A549 (cell line): ENCODE measurements at regions of chr20 and their contacts with region 1.

Region 1: GRCh38 chr20:49384437-49385088 is 97.9 kb downstream of the KCNB1 start:
- DNase-seq: peak; percentile 39 to 74
- ATAC-seq: peak; percentile 73 to 87
- H3K4me3 ChIP-seq: no peak overlapping the region
- H3K27ac ChIP-seq: no peak overlapping the region; a peak in 1 of 6 replicates
- H3K4me1 ChIP-seq: peaks cover 26% of the 10 kb centered on the region
- CTCF ChIP-seq: peak; percentile 67
- EP300 ChIP-seq: no peak
- POLR2A ChIP-seq: no peak
- RAD21 ChIP-seq: peak; percentile 26 to 34; a peak in 3 of 5 replicates

Region 2: GRCh38 chr20:49267327-49267726 is 117.2 kb before region 1 on chr20:
- CTCF ChIA-PET with region 1: no interaction called
- POLR2A ChIA-PET with region 1: no interaction called
- DNase-seq: no peak
- ATAC-seq: no peak
- H3K4me3 ChIP-seq: no peak overlapping the region
- H3K27ac ChIP-seq: no peak overlapping the region
- H3K4me1 ChIP-seq: no peaks in the 10 kb centered on the region
- CTCF ChIP-seq: no peak
- EP300 ChIP-seq: no peak
- POLR2A ChIP-seq: no peak
- RAD21 ChIP-seq: no peak

Region 3: GRCh38 chr20:49323622-49324238 is 60.8 kb before region 1 on chr20:
- CTCF ChIA-PET with region 1: no interaction called
- POLR2A ChIA-PET with region 1: no interaction called
- DNase-seq: peak in 1 of 2 experiments; percentile 47
- ATAC-seq: peak; percentile 58 to 68
- H3K4me3 ChIP-seq: no peak overlapping the region
- H3K27ac ChIP-seq: no peak overlapping the region
- H3K4me1 ChIP-seq: peaks cover 4% of the 10 kb centered on the region; the same call in 1 of the 3 replicates
- CTCF ChIP-seq: no peak
- EP300 ChIP-seq: no peak
- POLR2A ChIP-seq: no peak
- RAD21 ChIP-seq: peak; percentile 33 to 44; a peak in 2 of 5 replicates

Region 4: DNA sequence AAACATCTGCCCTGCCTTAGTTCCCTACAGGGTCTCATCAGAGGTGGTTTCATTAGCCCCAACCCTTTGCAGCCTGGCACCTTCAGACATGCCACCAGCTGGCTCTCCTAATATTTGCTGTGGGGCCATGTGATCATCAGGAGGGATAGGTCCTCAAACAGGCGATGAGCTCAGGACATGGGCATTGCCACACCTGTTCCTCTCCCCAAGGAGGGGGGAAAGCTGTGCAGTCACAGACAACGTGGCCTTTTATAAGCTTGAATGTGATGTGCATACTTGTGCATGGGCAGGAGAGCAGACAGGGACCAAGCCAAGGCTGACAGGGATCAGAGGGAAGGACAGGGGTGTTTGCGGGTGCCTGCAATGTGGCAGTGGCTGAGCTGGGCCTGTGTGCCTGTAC is 27.9 kb before region 1 on chr20:
- CTCF ChIA-PET with region 1: interaction called, 25 read pairs
- POLR2A ChIA-PET with region 1: no interaction called
- DNase-seq: no peak
- ATAC-seq: peak in 1 of 2 experiments; percentile 17; a peak in 1 of 6 replicates
- H3K4me3 ChIP-seq: no peak overlapping the region
- H3K27ac ChIP-seq: no peak overlapping the region; a peak in 1 of 6 replicates
- H3K4me1 ChIP-seq: peaks cover 21% of the 10 kb centered on the region; the same call in 2 of the 3 replicates
- CTCF ChIP-seq: no peak
- EP300 ChIP-seq: no peak
- POLR2A ChIP-seq: no peak
- RAD21 ChIP-seq: no peak

Region 5: DNA sequence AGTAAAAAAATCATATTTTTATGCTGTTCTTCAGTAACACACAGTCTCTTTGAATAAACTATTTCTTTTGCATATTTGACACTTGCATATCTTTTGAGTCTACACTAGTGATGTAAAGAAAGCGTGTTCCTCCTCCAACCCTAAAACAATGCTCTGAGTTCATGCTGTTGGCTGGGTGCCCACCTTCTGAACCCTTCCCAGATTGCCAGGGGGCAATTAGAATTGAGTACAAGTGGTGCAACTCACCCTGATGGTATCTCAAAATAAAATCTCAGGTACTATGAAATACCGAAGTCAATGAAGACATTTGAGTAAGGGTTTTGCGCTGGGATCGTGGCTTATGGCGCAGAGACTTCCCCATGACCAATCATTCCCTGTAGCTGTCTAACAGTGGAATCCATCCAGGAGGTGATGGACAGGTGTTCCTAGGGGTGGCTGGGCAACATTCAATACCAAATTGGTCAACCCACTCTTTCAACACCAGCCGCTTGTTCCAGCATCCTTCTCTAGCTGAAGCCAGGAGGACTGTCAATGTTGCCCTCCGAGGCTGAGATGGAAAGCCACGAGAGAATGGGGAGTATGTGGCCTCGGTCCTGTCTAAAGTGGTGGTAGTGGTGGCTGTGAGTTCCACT is 12.4 kb before region 1 on chr20:
- CTCF ChIA-PET with region 1: interaction called, 27 read pairs
- POLR2A ChIA-PET with region 1: no interaction called
- DNase-seq: no peak
- ATAC-seq: no peak
- H3K4me3 ChIP-seq: no peak overlapping the region
- H3K27ac ChIP-seq: no peak overlapping the region
- H3K4me1 ChIP-seq: no peaks in the 10 kb centered on the region
- CTCF ChIP-seq: no peak
- EP300 ChIP-seq: no peak
- POLR2A ChIP-seq: no peak
- RAD21 ChIP-seq: no peak

Region 6: DNA sequence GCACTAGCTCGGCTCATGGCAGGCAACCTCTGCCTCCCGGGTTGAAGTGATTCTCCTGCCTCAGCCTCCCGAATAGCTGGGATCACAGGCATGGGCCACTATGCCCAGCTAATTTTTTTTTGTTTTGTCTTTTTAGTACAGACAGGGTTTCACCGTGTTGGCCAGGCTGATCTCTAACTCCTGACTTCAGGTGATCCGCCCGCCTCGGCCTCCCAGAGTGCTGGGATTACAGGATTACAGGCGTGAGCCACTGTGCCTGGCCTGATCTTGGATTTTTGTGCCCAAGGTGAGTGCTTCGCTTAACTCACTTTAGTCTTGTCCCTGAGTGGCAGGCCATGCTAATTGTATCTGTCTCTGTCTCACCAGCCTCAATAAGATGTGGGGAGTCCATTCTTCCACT is 19.3 kb after region 1 on chr20:
- CTCF ChIA-PET with region 1: interaction called, 60 read pairs
- POLR2A ChIA-PET with region 1: no interaction called
- DNase-seq: no peak
- ATAC-seq: no peak
- H3K4me3 ChIP-seq: no peak overlapping the region
- H3K27ac ChIP-seq: no peak overlapping the region
- H3K4me1 ChIP-seq: no peaks in the 10 kb centered on the region
- CTCF ChIP-seq: no peak
- EP300 ChIP-seq: no peak
- POLR2A ChIP-seq: no peak
- RAD21 ChIP-seq: no peak

Region 7: DNA sequence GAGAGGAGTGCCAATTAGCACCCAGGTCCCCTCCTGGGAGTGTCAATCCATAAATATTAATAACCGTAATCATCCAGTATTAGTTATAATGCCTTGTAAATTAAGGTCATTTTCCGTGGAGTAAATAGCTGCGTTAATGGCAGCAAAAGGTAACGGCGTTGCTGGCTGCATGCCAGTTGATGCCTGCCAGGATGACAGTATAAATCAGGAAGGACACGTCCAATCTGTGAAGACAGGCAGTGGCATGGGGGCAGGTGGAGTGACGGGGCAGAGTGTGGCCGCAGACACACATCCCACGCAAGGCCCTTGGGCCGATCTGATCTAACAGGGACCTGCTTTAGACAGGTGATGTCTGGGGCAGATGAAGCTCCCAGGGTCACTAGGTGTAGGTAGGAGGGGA is 48.8 kb after region 1 on chr20:
- CTCF ChIA-PET with region 1: no interaction called
- POLR2A ChIA-PET with region 1: no interaction called
- DNase-seq: no peak
- ATAC-seq: no peak
- H3K4me3 ChIP-seq: no peak overlapping the region
- H3K27ac ChIP-seq: no peak overlapping the region
- H3K4me1 ChIP-seq: peaks cover 12% of the 10 kb centered on the region
- CTCF ChIP-seq: no peak
- EP300 ChIP-seq: no peak
- POLR2A ChIP-seq: no peak
- RAD21 ChIP-seq: no peak

Region 8: GRCh38 chr20:49508435-49509199 is 124.1 kb after region 1 on chr20:
- CTCF ChIA-PET with region 1: interaction called, 29 read pairs
- POLR2A ChIA-PET with region 1: interaction called, 3 read pairs
- DNase-seq: peak; percentile 52 to 61
- ATAC-seq: peak; percentile 66 to 80
- H3K4me3 ChIP-seq: no peak overlapping the region
- H3K27ac ChIP-seq: peak overlapping the region; percentile 21 to 50; a peak in 2 of 6 replicates
- H3K4me1 ChIP-seq: peaks cover 12% of the 10 kb centered on the region; the same call in 1 of the 3 replicates
- CTCF ChIP-seq: peak; percentile 81
- EP300 ChIP-seq: no peak
- POLR2A ChIP-seq: no peak
- RAD21 ChIP-seq: peak; percentile 67 to 72